Right ventricle myocardium inferior (tissue), 1 donor: ENCODE measurements at regions of chr12 and their contacts with region 1.

Region 1: DNA sequence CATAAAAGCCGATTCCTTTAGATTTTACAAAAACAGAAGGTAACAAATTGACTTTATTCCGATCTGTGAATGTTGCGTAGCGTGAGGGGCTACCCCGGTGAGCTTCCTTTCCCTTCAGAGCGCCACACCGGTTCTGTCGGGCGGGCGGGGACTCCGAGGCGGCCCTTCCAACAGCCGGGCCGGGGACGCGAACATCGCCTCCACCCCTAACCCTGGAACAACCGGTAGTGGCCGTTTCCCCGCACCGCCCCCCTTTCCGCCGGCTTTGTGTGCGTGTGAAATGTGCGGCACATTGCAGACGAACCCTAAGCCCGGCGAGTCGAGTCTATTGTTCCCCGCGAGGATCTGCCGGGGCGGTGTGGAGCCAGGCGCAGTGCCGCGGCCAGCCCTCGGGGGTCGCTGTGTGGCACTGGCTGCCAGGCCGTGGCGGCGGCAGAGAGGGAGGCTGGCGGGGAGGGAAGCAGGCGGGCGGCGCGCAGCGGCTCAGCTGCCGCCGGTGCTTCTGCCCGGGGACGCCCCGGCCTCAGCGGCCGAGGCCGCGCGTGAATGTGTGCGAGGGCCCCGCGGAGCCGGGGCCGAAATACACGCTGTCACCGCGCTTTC is 775 bp upstream of the ARID2 start:
- DNase-seq: peak; percentile 98
- ATAC-seq: peak; percentile 87

Region 2: GRCh38 chr12:45170456-45171042 is 558.2 kb before region 1 on chr12:
- intact Hi-C with region 1: loop called (anchors 5 kb)
- DNase-seq: peak; percentile 70
- ATAC-seq: peak; percentile 69

Region 3: DNA sequence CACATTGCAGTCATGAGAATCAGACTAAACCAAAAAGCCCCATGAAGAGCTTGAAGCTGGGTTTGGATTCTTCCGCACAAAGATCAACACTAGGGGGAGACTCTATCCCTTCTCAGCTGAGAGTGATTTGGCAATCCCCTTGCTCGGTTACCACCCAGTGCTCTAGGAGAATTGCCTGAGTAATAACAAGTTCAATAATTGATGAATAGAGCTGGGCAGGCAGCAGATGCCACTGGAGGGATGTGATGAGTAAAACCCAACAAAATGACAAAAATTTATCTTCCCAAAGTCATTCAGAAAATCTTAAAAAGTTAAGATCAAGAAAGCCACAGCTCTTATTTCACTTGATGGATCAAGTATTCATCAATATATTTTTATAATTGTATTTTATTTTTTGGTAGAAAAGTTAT is 184.8 kb before region 1 on chr12:
- intact Hi-C with region 1: loop called (anchors 5 kb)
- DNase-seq: no peak
- ATAC-seq: peak; percentile 76

Region 4: DNA sequence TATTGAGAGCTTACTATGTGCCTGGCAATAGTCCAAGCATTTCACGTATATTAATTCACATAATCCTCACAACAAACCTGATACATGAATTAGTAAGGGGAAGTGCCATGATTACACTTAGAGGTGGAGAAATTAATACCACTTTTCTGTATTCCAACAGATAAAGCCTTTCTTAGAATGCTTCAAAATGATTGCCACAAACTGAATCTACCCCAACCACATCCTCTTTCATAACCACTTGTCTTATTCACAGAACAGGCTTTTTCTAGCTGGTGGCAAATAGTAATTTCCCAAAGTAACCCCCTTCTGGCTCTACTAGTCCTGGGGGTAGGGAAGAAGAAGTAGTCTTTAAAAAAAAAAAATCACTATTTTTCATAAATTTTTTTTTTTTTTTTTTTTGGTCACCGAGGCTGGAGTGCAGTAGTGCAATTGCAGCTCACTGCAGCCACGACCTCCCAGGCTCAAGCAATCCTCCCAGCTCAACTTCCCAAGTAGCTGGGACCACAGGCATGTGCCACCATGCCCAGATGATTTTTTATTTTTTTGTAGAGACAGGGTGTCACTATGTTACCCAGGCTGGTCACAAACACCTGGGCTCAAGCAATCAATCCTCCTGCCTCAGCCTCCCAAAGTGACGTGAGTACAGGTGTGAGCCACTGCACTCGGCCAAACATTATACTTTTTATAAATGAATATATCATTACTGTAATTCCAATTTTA is 58.2 kb before region 1 on chr12:
- intact Hi-C with region 1: loop called (anchors 5 kb)
- DNase-seq: no peak
- ATAC-seq: no peak

Region 5: DNA sequence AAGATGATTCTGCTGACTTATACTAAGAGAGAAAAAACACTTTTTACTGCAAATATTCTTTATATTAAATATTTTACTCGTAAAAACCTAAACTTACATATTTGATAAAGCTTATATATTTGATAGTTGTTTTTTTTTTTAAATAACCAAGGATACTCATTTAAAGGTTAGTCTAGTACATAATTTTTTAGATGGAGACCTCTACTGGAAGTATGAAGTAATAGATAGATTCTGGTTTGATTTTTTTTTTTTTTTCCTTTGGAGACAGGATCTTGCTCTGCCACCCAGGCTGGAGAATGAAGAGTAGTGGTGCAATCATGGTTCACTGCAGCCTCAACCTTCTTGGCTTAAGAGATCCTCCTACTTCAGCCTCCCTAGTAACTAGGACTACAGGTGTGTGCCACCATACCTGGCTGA is 17.1 kb after region 1 on chr12:
- intact Hi-C with region 1: no loop called
- DNase-seq: no peak
- ATAC-seq: no peak

Region 6: DNA sequence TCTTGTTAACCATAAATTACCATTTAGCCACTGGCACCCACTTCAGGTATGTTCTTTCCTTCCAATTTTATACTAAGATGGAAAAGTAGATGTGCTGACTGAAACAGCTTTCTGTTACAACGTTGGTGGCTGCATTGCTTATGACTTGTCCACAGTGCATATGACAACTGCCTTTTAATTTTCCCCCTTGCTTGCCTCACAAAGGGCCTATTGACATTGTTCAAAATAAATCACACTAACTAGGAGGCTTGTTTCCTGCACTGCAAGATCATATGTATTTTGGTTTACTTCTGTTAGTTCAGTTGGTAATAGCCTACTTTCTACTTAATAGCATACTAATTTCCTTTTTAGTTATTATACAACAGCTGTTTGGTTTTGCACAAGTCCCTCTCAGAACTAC is 206.2 kb after region 1 on chr12:
- intact Hi-C with region 1: no loop called
- DNase-seq: no peak
- ATAC-seq: no peak